ENCODE measurements at regions of chr11 and their contacts with region 1.

Region 1: DNA sequence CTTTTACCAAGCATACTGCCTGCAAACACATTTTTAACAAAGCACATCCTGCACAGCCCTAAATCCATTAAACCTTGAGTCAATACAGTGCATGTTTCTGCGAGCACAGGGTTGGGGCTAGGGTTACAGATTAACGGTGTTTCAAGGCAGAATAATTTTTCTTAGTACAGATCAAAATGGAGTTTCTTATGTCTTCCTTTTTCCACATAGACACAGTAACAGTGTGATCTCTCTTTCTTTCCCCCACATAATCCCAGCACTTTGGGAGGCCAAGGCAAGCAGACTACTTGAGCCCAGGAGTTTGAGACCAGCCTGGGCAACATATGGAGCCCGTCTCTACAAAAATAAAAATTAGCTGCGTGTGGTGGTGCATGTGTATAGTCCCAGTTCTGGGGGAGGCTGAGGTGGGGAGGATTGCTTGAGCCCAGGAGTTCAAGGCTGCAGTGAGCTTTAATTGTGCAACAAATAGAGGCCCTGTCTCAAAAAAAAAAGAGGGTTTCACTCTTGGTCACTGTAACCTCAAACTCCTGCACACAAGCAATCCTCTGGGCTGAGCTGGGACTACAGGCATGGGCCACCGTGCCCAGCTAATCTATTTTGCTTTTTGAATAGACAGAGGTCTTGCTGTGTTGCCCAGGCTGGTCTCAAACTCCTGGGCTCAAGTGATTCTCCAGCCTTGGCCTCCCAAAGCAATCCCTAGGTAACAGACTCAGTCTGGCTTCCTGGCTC is 19.7 kb upstream of the SLC3A2 start:
- DNase-seq: no peak
- ATAC-seq: no peak
- H3K4me3 ChIP-seq: no peak overlapping the region
- H3K27ac ChIP-seq: peak overlapping the region in 1 of 12 donors; percentile 3
- H3K4me1 ChIP-seq: peaks cover 0 to 29% (median 5%) of the 10 kb centered on the region in 12 donors
- H3K27me3 ChIP-seq: no peaks in the 10 kb centered on the region
- CTCF ChIP-seq: no peak
- POLR2A ChIP-seq: no peak

Region 2: GRCh38 chr11:62383822-62384221 is 477.2 kb before region 1 on chr11:
- intact Hi-C with region 1: loop called in 1 of 10 experiments (anchors 10 kb)
- DNase-seq: no peak
- ATAC-seq: no peak
- H3K4me3 ChIP-seq: no peak overlapping the region
- H3K27ac ChIP-seq: no peak overlapping the region
- H3K4me1 ChIP-seq: peaks cover 0 to 9% (median 2%) of the 10 kb centered on the region in 12 donors
- H3K27me3 ChIP-seq: no peaks in the 10 kb centered on the region
- CTCF ChIP-seq: no peak
- POLR2A ChIP-seq: no peak